ENCODE measurements at regions of chr4 and their contacts with region 1.

Region 1: DNA sequence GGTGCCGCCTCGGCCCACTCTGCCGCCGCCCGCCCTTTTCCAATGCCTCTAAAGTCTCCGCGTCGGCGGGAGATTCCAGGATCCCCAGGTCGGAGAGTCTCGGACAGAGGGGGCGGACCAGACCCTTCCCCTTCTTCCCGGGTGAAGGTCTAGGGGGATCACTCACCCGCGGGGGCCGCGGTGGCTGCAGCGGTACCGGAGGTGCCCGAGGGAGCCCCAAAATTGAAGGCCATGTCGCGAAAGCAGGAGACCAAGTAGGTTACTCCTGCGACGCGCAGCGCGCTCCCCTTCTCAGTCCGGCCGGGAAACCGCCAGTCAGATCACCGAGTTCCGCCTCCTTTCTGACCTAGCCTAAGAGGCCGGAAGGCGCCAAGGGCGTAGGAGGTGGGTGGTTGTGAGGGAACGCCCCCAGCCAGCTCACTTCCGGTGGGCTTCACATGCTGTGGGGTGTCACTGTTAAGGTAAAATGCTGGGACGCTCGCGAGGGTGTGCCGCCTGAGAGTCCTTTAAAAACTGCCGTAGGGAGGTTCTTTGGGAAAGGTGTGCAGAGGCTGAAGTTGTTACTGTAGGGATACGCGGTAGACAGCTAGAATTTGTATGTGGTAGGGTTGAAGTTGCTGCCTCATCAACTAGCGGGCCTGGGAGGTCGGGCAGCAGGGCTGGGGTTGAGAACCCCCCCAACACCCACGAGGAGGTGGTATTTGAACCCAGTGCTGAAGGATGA is at the start of gene NUP54:
- DNase-seq: peak; percentile 97
- H3K4me3 Mint-ChIP-seq: peak within 1 kb of the TSS; percentile 100
- H3K27ac Mint-ChIP-seq: peak within 1 kb of the TSS; percentile 97
- H3K4me1 Mint-ChIP-seq: peaks cover 27% of the 10 kb centered on the region
- H3K27me3 Mint-ChIP-seq: no peaks in the 10 kb centered on the region
- total RNA-seq, gene NUP54: 43.9 to 53.4 TPM

Region 2: GRCh38 chr4:74897386-74897785 is 1250.9 kb before region 1 on chr4:
- CTCF ChIA-PET with region 1: no interaction called
- intact Hi-C with region 1: no loop called
- DNase-seq: no peak
- H3K4me3 Mint-ChIP-seq: no peak overlapping the region
- H3K27ac Mint-ChIP-seq: no peak overlapping the region
- H3K4me1 Mint-ChIP-seq: no peaks in the 10 kb centered on the region
- H3K27me3 Mint-ChIP-seq: no peaks in the 10 kb centered on the region

Region 3: GRCh38 chr4:75514131-75514948 is 634.0 kb before region 1 on chr4 and contains the starts of genes RCHY1 and THAP6:
- CTCF ChIA-PET with region 1: no interaction called
- intact Hi-C with region 1: loop called (anchors 1 kb)
- DNase-seq: peak; percentile 94
- H3K4me3 Mint-ChIP-seq: no peak within 1 kb of the TSS
- H3K27ac Mint-ChIP-seq: peak within 1 kb of the TSS; percentile 98
- H3K4me1 Mint-ChIP-seq: peaks cover 39% of the 10 kb centered on the region
- H3K27me3 Mint-ChIP-seq: no peaks in the 10 kb centered on the region
- total RNA-seq, gene RCHY1: 31.3 to 34.6 TPM
- total RNA-seq, gene THAP6: 14.3 to 15.4 TPM

Region 4: GRCh38 chr4:75630174-75630936 is 517.9 kb before region 1 on chr4 and contains the start of gene CDKL2:
- CTCF ChIA-PET with region 1: no interaction called
- intact Hi-C with region 1: loop called (anchors 10 kb)
- DNase-seq: peak; percentile 91
- H3K4me3 Mint-ChIP-seq: peak within 1 kb of the TSS; percentile 72
- H3K27ac Mint-ChIP-seq: no peak within 1 kb of the TSS
- H3K4me1 Mint-ChIP-seq: peaks cover 5% of the 10 kb centered on the region
- H3K27me3 Mint-ChIP-seq: no peaks in the 10 kb centered on the region
- total RNA-seq, gene CDKL2: 0.79 to 1.2 TPM

Region 5: DNA sequence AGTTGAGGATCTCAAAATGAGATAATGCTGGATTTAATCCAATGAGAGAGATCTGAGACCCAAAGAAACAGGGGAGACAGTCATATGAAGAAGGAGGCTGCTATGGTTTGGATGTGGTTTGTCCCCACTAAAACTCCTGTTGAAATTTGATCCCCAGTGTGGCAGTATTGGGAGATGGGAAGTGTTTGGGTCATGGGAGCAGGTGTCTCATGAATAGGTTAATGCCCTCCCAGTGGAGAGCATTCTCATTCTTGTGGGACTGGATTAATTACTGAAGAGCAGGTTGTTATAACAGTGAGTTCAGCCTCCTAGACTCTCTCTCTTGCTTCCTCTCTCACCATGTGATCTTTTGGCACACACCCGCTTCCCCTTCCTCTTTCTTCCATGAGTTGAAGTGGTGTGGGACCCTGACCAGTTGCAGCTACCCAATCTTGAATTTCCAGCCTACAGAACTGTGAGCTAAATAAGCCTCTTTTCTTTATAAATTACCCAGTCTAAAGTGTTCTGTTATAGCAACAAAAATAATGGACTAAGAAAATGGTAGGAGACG is 316.4 kb before region 1 on chr4:
- CTCF ChIA-PET with region 1: no interaction called
- intact Hi-C with region 1: no loop called
- DNase-seq: no peak
- H3K4me3 Mint-ChIP-seq: no peak overlapping the region
- H3K27ac Mint-ChIP-seq: no peak overlapping the region
- H3K4me1 Mint-ChIP-seq: no peaks in the 10 kb centered on the region
- H3K27me3 Mint-ChIP-seq: peaks cover 2% of the 10 kb centered on the region

Region 6: DNA sequence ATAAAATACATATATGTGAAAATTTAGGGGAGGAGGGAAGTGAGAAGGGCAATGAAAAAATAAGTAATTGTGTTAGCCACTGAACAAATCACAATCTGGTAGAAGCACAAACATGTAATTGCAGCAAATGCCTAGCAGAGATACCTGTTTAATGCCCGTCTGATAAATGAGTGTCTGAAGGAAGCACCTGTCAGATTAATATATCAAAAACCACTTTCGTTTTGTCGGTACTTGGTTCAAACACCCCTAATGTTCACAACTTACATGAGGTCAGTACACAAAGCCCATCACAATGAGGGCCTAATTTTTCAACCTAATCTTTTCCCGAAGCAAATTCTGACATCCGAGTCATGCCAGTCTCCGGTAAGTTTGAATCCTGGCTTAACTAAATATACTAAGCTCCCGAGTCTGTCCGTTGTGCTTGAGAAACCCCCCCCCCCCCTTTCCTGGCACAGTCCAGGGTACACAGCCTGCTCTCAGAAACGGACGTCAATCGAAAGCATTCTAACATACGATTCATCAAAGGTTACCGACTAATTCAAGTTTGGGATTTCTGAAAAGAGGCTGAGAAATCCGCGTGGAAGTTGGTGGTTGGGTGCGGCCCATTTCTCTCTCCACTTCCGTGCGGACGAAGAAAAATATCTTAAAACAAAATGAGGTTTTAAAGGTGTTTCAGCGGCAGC is 158.3 kb before region 1 on chr4:
- CTCF ChIA-PET with region 1: interaction called, 3 read pairs
- intact Hi-C with region 1: loop called (anchors 1 kb)
- DNase-seq: no peak
- H3K4me3 Mint-ChIP-seq: peak overlapping the region; percentile 85
- H3K27ac Mint-ChIP-seq: peak overlapping the region; percentile 72
- H3K4me1 Mint-ChIP-seq: peaks cover 27% of the 10 kb centered on the region
- H3K27me3 Mint-ChIP-seq: no peaks in the 10 kb centered on the region

Region 7: GRCh38 chr4:76016393-76016792 is 131.9 kb before region 1 on chr4:
- CTCF ChIA-PET with region 1: no interaction called
- intact Hi-C with region 1: no loop called
- DNase-seq: peak; percentile 40
- H3K4me3 Mint-ChIP-seq: no peak overlapping the region
- H3K27ac Mint-ChIP-seq: no peak overlapping the region
- H3K4me1 Mint-ChIP-seq: peaks cover 6% of the 10 kb centered on the region
- H3K27me3 Mint-ChIP-seq: peaks cover 4% of the 10 kb centered on the region

Region 8: DNA sequence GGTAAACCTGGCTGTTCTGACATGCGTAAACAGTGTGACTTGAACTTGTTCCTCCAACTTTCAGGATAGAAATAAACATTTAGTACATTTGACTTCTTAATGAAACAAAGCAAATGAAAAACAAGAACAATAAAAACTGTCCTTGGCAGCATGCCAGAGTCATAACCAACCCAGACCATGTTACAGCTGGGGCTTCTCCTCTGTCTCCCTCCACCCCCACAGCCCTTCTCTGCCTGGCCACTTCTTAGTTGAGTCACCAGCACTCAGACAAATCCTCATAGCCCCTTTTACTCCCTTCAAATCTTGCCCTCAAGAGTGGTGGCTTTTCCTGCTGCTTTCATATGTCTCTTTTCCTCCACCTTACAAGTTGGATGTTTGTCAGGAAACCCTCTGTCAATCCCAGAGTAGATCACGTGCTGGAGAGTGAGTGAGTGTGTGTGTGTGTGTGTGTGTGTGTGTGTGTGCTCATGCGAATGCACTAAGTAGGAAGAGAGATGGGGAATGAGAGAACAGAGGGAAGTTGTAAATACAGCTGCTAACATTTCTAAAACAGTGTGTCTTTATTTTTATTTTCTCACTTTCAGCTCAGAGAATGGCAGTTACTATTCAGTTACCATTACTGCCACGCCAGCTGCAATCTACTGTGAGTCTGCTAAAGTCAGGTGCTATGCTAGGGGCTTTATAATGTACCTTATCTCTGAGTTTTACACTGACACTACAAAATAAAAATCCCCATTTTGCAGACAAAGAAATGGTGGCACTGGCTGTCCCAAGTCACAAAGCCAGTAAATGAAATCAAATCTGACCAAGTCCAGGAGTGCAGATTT is 50.3 kb after region 1 on chr4:
- CTCF ChIA-PET with region 1: no interaction called
- intact Hi-C with region 1: loop called (anchors 1 kb)
- DNase-seq: peak; percentile 73
- H3K4me3 Mint-ChIP-seq: peak overlapping the region; percentile 8
- H3K27ac Mint-ChIP-seq: no peak overlapping the region
- H3K4me1 Mint-ChIP-seq: peaks cover 34% of the 10 kb centered on the region
- H3K27me3 Mint-ChIP-seq: no peaks in the 10 kb centered on the region

Region 9: GRCh38 chr4:76213415-76214176 is 65.3 kb after region 1 on chr4 and contains the start of gene SCARB2:
- CTCF ChIA-PET with region 1: interaction called, 3 read pairs
- intact Hi-C with region 1: loop called (anchors 1 kb)
- DNase-seq: peak; percentile 76
- H3K4me3 Mint-ChIP-seq: peak within 1 kb of the TSS; percentile 76
- H3K27ac Mint-ChIP-seq: peak within 1 kb of the TSS; percentile 74
- H3K4me1 Mint-ChIP-seq: peaks cover 31% of the 10 kb centered on the region
- H3K27me3 Mint-ChIP-seq: no peaks in the 10 kb centered on the region
- total RNA-seq, gene SCARB2: 5.4 to 7.8 TPM

Region 10: GRCh38 chr4:76301068-76301774 is 152.9 kb after region 1 on chr4:
- CTCF ChIA-PET with region 1: no interaction called
- intact Hi-C with region 1: loop called (anchors 5 kb)
- DNase-seq: peak; percentile 60
- H3K4me3 Mint-ChIP-seq: no peak overlapping the region
- H3K27ac Mint-ChIP-seq: no peak overlapping the region
- H3K4me1 Mint-ChIP-seq: peaks cover 23% of the 10 kb centered on the region
- H3K27me3 Mint-ChIP-seq: peaks cover 4% of the 10 kb centered on the region

Region 11: GRCh38 chr4:76535603-76536367 is 387.5 kb after region 1 on chr4:
- CTCF ChIA-PET with region 1: no interaction called
- intact Hi-C with region 1: no loop called
- DNase-seq: no peak
- H3K4me3 Mint-ChIP-seq: no peak overlapping the region
- H3K27ac Mint-ChIP-seq: no peak overlapping the region
- H3K4me1 Mint-ChIP-seq: no peaks in the 10 kb centered on the region
- H3K27me3 Mint-ChIP-seq: no peaks in the 10 kb centered on the region